ENCODE measurements at regions of chr5 and their contacts with region 1.

Region 1: GRCh38 chr5:57779383-57780223 is 297.0 kb upstream of the ACTBL2 start:
- DNase-seq: peak; percentile 69
- H3K4me3 ChIP-seq: no peak overlapping the region
- H3K27ac ChIP-seq: no peak overlapping the region
- H3K4me1 ChIP-seq: peaks cover 17% of the 10 kb centered on the region
- H3K27me3 ChIP-seq: no peaks in the 10 kb centered on the region
- CTCF ChIP-seq: peak; percentile 56 to 68

Region 2: DNA sequence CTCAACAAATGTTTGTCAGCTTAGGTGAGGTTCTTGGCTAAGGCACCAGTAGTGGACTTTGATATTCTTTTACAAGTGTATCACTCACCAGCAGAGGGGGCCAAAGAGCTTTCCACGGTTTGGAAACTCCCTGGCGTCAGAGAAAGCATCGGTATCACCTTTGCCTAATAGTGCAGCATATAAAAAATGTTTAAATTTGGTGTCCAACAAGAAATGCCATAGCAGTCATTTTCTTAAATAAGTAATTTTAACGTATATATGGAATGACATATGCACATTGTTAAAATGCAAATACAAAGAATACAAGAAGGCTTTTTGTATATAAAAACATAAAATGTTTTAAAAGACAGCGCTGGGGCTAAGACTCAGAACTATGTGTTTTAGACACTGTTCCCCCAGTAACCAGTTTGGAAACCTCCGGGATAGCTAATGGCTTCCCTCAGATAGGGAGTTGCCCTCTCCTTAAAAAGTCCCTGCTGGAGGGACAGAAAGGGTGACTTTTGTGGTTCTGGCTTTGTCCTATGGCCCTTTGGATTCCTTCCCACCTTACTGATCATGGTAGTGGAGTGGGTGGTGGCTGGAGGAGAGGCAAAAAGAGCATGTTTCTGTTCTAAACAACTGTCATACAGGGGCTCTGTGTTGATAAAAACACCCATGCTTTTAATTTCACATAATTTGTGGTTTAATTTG is 481.2 kb before region 1 on chr5:
- CTCF ChIA-PET with region 1: no interaction called
- dilution Hi-C with region 1: no loop called
- in situ Hi-C with region 1: loop called in 1 of 2 experiments (anchors 10 kb)
- intact Hi-C with region 1: loop called (anchors 2 kb)
- DNase-seq: peak; percentile 73
- H3K4me3 ChIP-seq: no peak overlapping the region
- H3K27ac ChIP-seq: no peak overlapping the region
- H3K4me1 ChIP-seq: no peaks in the 10 kb centered on the region
- H3K27me3 ChIP-seq: no peaks in the 10 kb centered on the region
- CTCF ChIP-seq: peak; percentile 76 to 88

Region 3: DNA sequence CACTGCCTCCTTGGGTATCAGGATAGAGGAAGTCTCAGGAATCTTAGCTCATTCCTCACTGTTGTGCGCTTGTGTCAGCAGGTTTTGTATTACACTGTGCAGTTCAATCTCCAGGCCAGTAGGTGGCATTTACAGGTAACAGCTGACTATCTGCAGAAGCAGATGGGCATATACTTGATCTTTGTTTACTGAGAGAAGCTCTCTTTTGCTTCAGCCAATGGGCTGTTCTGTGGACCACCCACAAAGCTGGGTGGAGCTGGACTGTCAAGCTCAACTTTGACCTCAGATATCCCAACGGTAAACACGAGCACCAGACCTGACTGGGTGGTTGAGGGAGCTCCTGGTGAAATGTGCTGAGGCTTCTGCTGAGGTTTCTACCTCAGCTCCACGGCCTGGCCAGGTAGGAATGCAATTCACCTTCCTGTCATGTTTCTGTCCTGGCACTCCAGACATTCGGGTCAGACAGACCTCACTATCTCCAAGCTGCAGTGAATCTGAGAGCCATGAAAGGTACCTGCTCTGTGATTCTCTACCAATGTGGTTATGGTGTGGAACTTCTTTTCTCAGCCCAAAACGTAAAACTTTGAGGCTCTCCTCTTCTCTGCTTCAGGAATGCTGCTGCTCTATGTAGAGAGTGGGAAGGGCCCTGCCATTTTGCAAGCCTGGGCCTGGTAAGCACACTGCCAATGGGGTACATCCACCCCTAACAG is 129.1 kb before region 1 on chr5:
- CTCF ChIA-PET with region 1: interaction called, 12 read pairs
- dilution Hi-C with region 1: no loop called
- in situ Hi-C with region 1: loop called in 1 of 2 experiments (anchors 25 kb)
- intact Hi-C with region 1: loop called (anchors 1 kb)
- DNase-seq: peak; percentile 74
- H3K4me3 ChIP-seq: no peak overlapping the region
- H3K27ac ChIP-seq: no peak overlapping the region
- H3K4me1 ChIP-seq: peaks cover 5% of the 10 kb centered on the region
- H3K27me3 ChIP-seq: no peaks in the 10 kb centered on the region
- CTCF ChIP-seq: peak; percentile 91 to 93

Region 4: DNA sequence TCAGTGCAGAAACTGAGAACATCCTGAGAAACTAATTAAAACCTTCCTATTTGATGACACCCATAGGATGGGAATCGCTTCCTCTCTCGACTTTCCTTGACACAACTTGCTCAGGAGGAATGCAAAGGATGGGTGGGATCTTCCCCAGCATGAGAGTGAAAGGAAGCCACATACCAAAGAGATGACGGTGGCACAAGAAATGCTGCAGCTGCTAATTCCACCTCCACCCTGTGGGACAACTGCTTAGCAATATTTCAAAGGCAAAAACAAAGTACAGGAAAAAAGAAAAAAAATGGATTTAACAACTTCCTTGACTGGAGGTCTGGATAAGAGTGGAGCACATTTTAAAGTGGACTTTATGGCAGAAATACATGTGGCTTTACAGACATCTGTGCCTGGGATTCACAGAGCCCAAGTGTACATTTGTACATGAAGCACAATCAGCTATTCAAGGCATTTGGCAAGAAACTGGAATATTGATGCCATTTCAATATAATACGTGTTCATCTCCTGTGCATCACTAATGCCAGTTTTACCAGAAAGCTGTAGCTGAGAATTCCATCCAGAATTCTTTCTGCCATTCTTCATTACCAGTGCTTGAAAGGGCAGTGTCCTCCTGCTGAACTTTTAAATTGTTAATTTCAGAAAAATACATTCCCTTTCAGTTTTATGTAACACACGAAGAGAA is 62.2 kb after region 1 on chr5:
- CTCF ChIA-PET with region 1: interaction called, 7 read pairs
- dilution Hi-C with region 1: no loop called
- in situ Hi-C with region 1: no loop called
- intact Hi-C with region 1: loop called (anchors 2 kb)
- DNase-seq: peak; percentile 99
- H3K4me3 ChIP-seq: no peak overlapping the region
- H3K27ac ChIP-seq: peak overlapping the region; percentile 99
- H3K4me1 ChIP-seq: peaks cover 60% of the 10 kb centered on the region
- H3K27me3 ChIP-seq: no peaks in the 10 kb centered on the region
- CTCF ChIP-seq: no peak

Region 5: DNA sequence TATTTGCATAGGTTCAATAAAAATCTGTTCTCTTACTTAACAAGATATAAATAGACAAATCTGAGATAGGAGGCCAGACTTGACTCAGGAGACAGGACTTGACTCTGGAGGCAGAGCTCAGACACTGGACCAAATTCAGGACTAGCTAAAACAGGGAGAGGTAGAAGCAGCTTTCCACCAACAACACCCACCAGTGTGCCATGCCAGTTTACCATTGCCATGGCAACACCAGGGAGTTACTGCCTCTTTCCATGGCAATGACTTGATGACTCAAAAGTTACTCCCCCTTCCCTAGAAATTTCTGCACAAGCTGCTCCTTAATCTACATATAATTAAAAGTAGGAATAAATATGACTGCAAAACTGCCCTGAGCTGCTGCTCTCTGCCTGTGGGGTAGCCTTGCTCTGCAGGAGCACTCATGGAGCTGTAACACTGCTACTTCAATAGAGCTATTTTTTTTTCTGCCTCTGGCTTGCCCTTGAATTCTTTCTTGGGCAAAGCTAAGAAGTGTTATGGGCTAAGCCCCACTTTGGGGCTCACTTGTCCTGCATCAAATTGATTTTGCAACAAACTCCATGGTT is 207.2 kb after region 1 on chr5:
- CTCF ChIA-PET with region 1: no interaction called
- dilution Hi-C with region 1: no loop called
- in situ Hi-C with region 1: no loop called
- intact Hi-C with region 1: loop called (anchors 10 kb)
- DNase-seq: peak; percentile 63
- H3K4me3 ChIP-seq: no peak overlapping the region
- H3K27ac ChIP-seq: no peak overlapping the region
- H3K4me1 ChIP-seq: peaks cover 11% of the 10 kb centered on the region
- H3K27me3 ChIP-seq: no peaks in the 10 kb centered on the region
- CTCF ChIP-seq: no peak

Region 6: GRCh38 chr5:58335518-58335917 is 555.9 kb after region 1 on chr5:
- CTCF ChIA-PET with region 1: no interaction called
- dilution Hi-C with region 1: no loop called
- in situ Hi-C with region 1: no loop called
- intact Hi-C with region 1: loop called (anchors 10 kb)
- DNase-seq: peak; percentile 26
- H3K4me3 ChIP-seq: no peak overlapping the region
- H3K27ac ChIP-seq: no peak overlapping the region
- H3K4me1 ChIP-seq: peaks cover 9% of the 10 kb centered on the region
- H3K27me3 ChIP-seq: no peaks in the 10 kb centered on the region
- CTCF ChIP-seq: peak in 1 of 2 donors; percentile 59

Region 7: GRCh38 chr5:58599217-58599616 is 819.6 kb after region 1 on chr5:
- CTCF ChIA-PET with region 1: no interaction called
- dilution Hi-C with region 1: no loop called
- in situ Hi-C with region 1: no loop called
- intact Hi-C with region 1: no loop called
- DNase-seq: no peak
- H3K4me3 ChIP-seq: no peak overlapping the region
- H3K27ac ChIP-seq: no peak overlapping the region
- H3K4me1 ChIP-seq: no peaks in the 10 kb centered on the region
- H3K27me3 ChIP-seq: no peaks in the 10 kb centered on the region
- CTCF ChIP-seq: no peak

Region 8: DNA sequence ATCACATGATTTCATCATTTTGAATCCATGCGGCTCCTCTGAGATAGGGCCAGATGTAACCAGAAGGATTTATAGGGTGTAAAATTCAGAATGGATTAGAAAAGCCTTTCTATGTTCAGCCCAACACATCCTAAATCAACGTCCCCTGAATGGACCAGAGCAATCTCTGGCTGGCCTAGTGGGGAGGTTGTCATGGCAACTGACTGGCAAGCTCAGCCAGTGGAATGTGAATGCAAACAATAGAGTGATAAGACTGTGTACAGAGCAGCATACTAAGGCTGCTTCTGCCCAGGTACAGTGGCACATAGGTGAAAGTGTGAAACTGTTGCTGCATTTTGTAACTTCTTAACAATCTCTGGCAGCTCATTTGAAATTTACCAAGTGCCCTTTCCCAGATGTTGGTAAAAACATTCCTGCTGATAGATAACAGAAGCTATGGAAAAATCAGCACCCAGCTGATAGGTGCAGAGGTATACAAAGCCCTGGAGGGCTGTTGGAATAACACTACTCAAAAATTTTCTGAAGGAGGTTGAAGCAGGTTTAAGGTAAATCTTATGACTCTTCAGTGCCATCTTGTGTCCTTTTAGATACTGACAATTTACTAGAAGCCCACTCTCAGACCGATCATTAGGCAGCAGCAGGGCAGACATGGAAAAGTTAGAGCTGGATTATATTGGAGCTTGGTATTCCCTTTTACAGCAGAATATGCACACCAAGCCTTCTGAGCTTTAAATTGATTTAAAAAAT is 1070.5 kb after region 1 on chr5:
- CTCF ChIA-PET with region 1: no interaction called
- dilution Hi-C with region 1: no loop called
- in situ Hi-C with region 1: no loop called
- intact Hi-C with region 1: loop called (anchors 10 kb)
- DNase-seq: peak; percentile 9
- H3K4me3 ChIP-seq: no peak overlapping the region
- H3K27ac ChIP-seq: no peak overlapping the region
- H3K4me1 ChIP-seq: no peaks in the 10 kb centered on the region
- H3K27me3 ChIP-seq: peaks cover 4% of the 10 kb centered on the region
- CTCF ChIP-seq: peak; percentile 24 to 57